Common myeloid progenitor, CD34-positive (primary cell): ENCODE measurements at regions of chr7 and their contacts with region 1.

Region 1: DNA sequence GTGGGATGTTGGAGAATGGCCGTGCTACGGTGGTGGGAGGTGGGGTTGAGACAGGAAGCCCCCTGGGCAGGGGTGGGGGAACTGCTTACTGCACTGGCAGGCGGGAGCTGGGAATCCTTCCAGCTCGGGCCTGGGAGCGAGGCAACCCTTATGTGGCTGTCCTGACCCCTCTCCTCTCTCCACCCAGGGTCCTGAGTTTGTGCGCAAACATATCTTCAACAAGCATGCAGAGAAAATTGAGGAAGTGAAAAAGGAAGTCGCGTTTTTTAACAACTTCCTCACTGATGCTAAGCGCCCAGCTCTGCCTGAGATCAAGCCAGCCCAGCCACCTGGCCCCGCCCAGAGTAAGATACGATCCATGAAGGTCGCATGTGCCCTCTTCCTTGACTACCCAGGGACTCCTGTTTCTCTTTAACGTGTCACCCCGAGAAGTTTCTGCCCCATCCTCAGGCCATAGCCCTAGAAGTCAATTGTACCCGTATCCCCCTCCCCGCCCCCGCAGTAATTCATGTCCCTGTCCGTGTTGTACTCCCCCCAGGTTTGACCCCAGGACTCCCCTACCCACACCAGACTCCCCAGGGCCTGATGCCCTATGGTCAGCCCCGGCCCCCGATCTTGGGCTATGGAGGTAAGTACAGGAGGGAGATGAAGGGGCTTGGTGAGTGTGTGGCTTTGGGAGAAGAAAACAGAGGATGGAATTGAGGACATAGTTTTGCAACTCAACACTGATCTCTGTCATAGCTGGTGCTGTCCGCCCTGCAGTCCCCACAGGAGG is 1.8 kb downstream of the UFSP1 start:
- DNase-seq: peak; percentile 86 to 92 (median 87)
- H3K4me3 ChIP-seq: peak overlapping the region in 4 of 7 experiments; percentile 4 to 52 (median 18)
- H3K27ac ChIP-seq: peak overlapping the region in 1 of 2 experiments; percentile 15
- H3K4me1 ChIP-seq: peaks cover 4 to 63% (median 55%) of the 10 kb centered on the region in 4 experiments
- H3K27me3 ChIP-seq: peaks cover 0 to 19% (median 5%) of the 10 kb centered on the region in 5 experiments

Region 2: DNA sequence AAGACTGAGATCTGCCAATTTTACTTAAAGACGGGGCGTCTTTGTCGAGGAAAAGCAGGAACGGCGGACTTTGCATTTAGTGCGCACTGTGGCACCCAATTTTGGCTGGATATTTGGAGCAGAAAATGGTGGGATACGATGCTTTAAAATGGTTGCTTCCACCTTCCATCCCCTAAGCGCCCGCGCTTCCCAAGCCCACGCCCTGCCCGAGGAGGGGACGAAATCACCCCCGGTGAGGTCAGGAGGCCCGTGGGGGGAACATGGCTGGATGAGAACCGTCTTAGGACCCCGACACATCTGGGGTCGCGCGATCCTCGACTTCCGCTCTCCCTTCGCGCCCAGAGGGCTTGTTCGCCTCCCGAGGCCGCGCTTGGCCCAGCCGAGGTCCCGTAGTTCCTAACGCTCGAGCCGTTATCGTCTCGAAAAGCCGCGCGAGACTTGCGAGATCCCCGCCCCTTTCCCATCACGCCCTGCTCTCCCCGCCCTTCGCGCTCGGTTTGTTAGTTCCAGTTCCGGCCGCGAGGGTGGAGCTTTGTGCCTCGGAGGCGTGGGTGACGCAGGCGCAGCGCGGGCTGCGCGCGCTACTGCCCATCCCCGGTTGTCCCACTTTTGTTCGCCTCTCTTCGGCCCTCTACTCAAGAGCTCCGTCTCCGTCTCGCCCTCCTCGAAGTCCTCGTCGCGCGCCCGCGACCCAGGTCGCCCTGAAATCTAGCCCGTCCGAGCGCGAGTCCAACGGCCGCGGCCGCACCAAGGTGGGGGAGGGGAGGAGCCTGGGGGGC is 12.9 kb before region 1 on chr7 and contains the start of gene SRRT:
- CTCF ChIA-PET with region 1: interaction called, 20 read pairs
- POLR2A ChIA-PET with region 1: interaction called, 8 read pairs
- DNase-seq: peak; percentile 98 to 99 (median 99)
- H3K4me3 ChIP-seq: peak within 1 kb of the TSS; percentile 76 to 97 (median 84)
- H3K27ac ChIP-seq: peak within 1 kb of the TSS; percentile 82 to 92
- H3K4me1 ChIP-seq: peaks cover 8 to 26% (median 19%) of the 10 kb centered on the region in 4 experiments
- H3K27me3 ChIP-seq: no peaks in the 10 kb centered on the region

Region 3: GRCh38 chr7:101099969-101100781 is 212.5 kb after region 1 on chr7:
- CTCF ChIA-PET with region 1: no interaction called
- POLR2A ChIA-PET with region 1: no interaction called
- DNase-seq: peak; percentile 94 to 98 (median 98)
- H3K4me3 ChIP-seq: peak overlapping the region in 3 of 7 experiments; percentile 19 to 55 (median 45)
- H3K27ac ChIP-seq: no peak overlapping the region
- H3K4me1 ChIP-seq: peaks cover 0 to 17% (median 16%) of the 10 kb centered on the region in 4 experiments
- H3K27me3 ChIP-seq: peaks cover 0 to 3% (median 0%) of the 10 kb centered on the region in 5 experiments